ENCODE measurements at regions of chr14 and their contacts with region 1.

Region 1: GRCh38 chr14:22872033-22872832 is 693 bp downstream of the LRP10 start:
- DNase-seq: peak; percentile 83
- CTCF ChIP-seq: peak; percentile 90

Region 2: GRCh38 chr14:22589096-22589839 is 283.0 kb before region 1 on chr14 and contains the start of gene DAD1:
- in situ Hi-C with region 1: loop called (anchors 25 kb)
- DNase-seq: peak; percentile 97
- CTCF ChIP-seq: no peak

Measured in GM13977 (cell line).